Psoas muscle (tissue), 8 donors: ENCODE measurements at regions of chr2 and their contacts with region 1.

Region 1: GRCh38 chr2:49288902-49289700 is 134.8 kb upstream of the FSHR start:
- DNase-seq: no peak
- ATAC-seq: no peak
- H3K4me3 ChIP-seq: no peak overlapping the region
- H3K27ac ChIP-seq: no peak overlapping the region
- H3K4me1 ChIP-seq: no peaks in the 10 kb centered on the region
- H3K27me3 ChIP-seq: no peaks in the 10 kb centered on the region
- CTCF ChIP-seq: no peak

Region 2: GRCh38 chr2:48707470-48707869 is 581.6 kb before region 1 on chr2:
- intact Hi-C with region 1: loop called in 1 of 2 experiments (anchors 5 kb)
- DNase-seq: no peak
- ATAC-seq: no peak
- H3K4me3 ChIP-seq: no peak overlapping the region
- H3K27ac ChIP-seq: no peak overlapping the region
- H3K4me1 ChIP-seq: no peaks in the 10 kb centered on the region
- H3K27me3 ChIP-seq: no peaks in the 10 kb centered on the region
- CTCF ChIP-seq: no peak

Region 3: GRCh38 chr2:49105506-49105905 is 183.6 kb before region 1 on chr2:
- intact Hi-C with region 1: no loop called
- DNase-seq: no peak
- ATAC-seq: no peak
- H3K4me3 ChIP-seq: no peak overlapping the region
- H3K27ac ChIP-seq: no peak overlapping the region
- H3K4me1 ChIP-seq: no peaks in the 10 kb centered on the region
- H3K27me3 ChIP-seq: no peaks in the 10 kb centered on the region
- CTCF ChIP-seq: no peak

Region 4: GRCh38 chr2:49318531-49318930 is 29.4 kb after region 1 on chr2:
- intact Hi-C with region 1: no loop called
- DNase-seq: no peak
- ATAC-seq: no peak
- H3K4me3 ChIP-seq: no peak overlapping the region
- H3K27ac ChIP-seq: no peak overlapping the region
- H3K4me1 ChIP-seq: no peaks in the 10 kb centered on the region
- H3K27me3 ChIP-seq: no peaks in the 10 kb centered on the region
- CTCF ChIP-seq: no peak